ENCODE measurements at regions of chr1 and their contacts with region 1.

Region 1: GRCh38 chr1:198929961-198930599 is 291.2 kb downstream of the PTPRC start:
- DNase-seq: peak; percentile 72
- H3K4me3 ChIP-seq: peak overlapping the region; percentile 67
- H3K27ac ChIP-seq: peak overlapping the region; percentile 76
- H3K4me1 ChIP-seq: peaks cover 36% of the 10 kb centered on the region
- CTCF ChIP-seq: no peak

Region 2: GRCh38 chr1:198175423-198176170 is 754.5 kb before region 1 on chr1:
- CTCF ChIA-PET with region 1: no interaction called
- POLR2A ChIA-PET with region 1: no interaction called
- intact Hi-C with region 1: loop called (anchors 5 kb)
- DNase-seq: peak; percentile 21
- H3K4me3 ChIP-seq: no peak overlapping the region
- H3K27ac ChIP-seq: no peak overlapping the region
- H3K4me1 ChIP-seq: peaks cover 34% of the 10 kb centered on the region
- CTCF ChIP-seq: no peak

Region 3: GRCh38 chr1:198534548-198535418 is 395.3 kb before region 1 on chr1:
- CTCF ChIA-PET with region 1: no interaction called
- POLR2A ChIA-PET with region 1: no interaction called
- intact Hi-C with region 1: loop called (anchors 5 kb)
- DNase-seq: peak; percentile 29
- H3K4me3 ChIP-seq: peak overlapping the region; percentile 14
- H3K27ac ChIP-seq: peak overlapping the region; percentile 41
- H3K4me1 ChIP-seq: peaks cover 62% of the 10 kb centered on the region
- CTCF ChIP-seq: no peak

Region 4: DNA sequence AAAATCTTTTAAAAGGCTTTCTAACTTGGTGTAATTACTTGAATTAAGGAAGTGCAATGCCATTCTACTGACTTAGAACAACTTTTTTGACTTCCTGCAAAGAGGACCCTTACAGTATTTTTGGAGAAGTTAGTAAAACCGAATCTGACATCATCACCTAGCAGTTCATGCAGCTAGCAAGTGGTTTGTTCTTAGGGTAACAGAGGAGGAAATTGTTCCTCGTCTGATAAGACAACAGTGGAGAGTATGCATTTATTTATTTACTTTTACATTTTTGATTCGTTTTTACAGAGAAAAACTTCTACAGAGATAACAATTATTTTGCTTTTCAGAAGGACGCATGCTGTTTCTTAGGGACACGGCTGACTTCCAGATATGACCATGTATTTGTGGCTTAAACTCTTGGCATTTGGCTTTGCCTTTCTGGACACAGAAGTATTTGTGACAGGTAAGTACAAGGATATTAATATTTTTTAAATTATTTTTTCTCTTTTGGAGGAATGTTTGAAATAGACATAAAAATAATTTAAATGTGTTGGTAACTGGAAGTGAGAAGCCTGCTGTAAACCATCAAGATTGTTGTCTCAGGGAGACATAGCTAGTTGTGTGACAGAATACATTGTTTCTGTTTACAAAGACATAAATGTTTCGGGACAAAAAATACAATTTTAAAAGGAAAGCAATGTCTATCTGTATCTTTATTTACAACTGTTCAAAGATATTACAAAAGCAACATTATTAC is 291.0 kb before region 1 on chr1 and contains the start of gene PTPRC:
- CTCF ChIA-PET with region 1: no interaction called
- POLR2A ChIA-PET with region 1: interaction called, 3 read pairs
- intact Hi-C with region 1: loop called (anchors 2 kb)
- DNase-seq: peak; percentile 88
- H3K4me3 ChIP-seq: peak within 1 kb of the TSS; percentile 87
- H3K27ac ChIP-seq: peak within 1 kb of the TSS; percentile 96
- H3K4me1 ChIP-seq: peaks cover 63% of the 10 kb centered on the region
- CTCF ChIP-seq: no peak
- total RNA-seq, gene PTPRC: 161 and 177 TPM in 2 replicates

Region 5: GRCh38 chr1:198913667-198914066 is 16.4 kb before region 1 on chr1:
- CTCF ChIA-PET with region 1: interaction called, 3 read pairs
- POLR2A ChIA-PET with region 1: interaction called, 19 read pairs
- intact Hi-C with region 1: no loop called
- DNase-seq: no peak
- H3K4me3 ChIP-seq: no peak overlapping the region
- H3K27ac ChIP-seq: no peak overlapping the region
- H3K4me1 ChIP-seq: no peaks in the 10 kb centered on the region
- CTCF ChIP-seq: no peak

Region 6: DNA sequence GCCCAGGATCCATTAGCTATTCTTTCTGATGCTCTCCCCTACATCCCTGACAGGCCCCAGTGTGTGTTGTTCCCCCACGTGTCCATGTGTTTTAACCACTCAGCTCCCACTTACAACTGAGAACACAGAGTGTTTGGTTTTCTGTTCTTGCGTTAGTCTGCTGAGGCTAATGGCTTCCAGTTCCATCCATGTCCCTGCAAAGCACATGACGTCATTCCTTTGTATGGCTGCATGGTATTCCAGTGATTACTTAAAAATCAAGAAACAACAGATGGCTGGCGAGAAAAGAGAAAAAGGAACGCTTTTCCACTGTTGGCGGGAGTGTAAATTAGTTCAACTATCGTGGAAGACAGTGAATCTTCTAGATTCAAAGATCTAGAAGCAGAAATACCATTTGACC is 264.8 kb after region 1 on chr1:
- CTCF ChIA-PET with region 1: no interaction called
- POLR2A ChIA-PET with region 1: no interaction called
- intact Hi-C with region 1: no loop called
- DNase-seq: no peak
- H3K4me3 ChIP-seq: no peak overlapping the region
- H3K27ac ChIP-seq: no peak overlapping the region
- H3K4me1 ChIP-seq: no peaks in the 10 kb centered on the region
- CTCF ChIP-seq: no peak